Heart left ventricle (tissue), 16 donors: ENCODE measurements at regions of chr6 and their contacts with region 1.

Region 1: DNA sequence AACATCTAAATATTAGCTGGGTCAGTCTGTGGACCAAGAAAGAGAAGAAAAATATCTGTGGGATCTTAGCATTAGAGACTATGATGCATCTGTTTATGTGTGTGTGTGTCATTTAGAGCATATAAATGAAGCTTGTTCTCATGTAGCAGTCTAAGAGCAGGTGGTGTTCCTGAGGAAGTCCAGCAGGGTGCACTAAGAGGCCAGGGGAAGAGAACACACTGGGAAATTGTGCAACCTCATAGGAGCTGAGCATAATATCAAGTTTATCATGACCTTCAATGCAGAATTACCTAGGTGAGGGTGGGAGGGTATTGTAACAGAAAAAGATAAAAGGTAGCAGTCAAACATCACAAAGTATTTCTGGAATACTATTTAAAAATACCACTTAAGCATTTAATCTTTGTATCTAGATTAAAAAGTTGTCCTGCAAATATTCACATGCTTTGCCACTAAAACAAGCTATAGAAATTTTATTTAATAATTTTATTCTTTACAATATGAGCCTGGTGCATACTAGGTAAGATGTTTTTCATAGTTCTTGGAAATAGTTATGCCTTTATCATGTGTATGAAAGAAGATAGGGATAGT is 80.5 kb downstream of the SMPDL3A start:
- DNase-seq: peak in 1 of 5 donors; percentile 24
- ATAC-seq: peak; percentile 61 to 84 (median 80)
- H3K4me3 ChIP-seq: no peak overlapping the region
- H3K27ac ChIP-seq: no peak overlapping the region
- H3K4me1 ChIP-seq: no peaks in the 10 kb centered on the region
- H3K27me3 ChIP-seq: peaks cover 0 to 6% (median 0%) of the 10 kb centered on the region in 9 donors
- CTCF ChIP-seq: peak; percentile 30 to 63 (median 52)
- POLR2A ChIP-seq: no peak

Region 2: GRCh38 chr6:122683989-122684651 is 185.4 kb before region 1 on chr6:
- intact Hi-C with region 1: no loop called
- DNase-seq: no peak
- ATAC-seq: no peak
- H3K4me3 ChIP-seq: no peak overlapping the region
- H3K27ac ChIP-seq: no peak overlapping the region
- H3K4me1 ChIP-seq: no peaks in the 10 kb centered on the region
- H3K27me3 ChIP-seq: no peaks in the 10 kb centered on the region
- CTCF ChIP-seq: no peak
- POLR2A ChIP-seq: no peak

Region 3: GRCh38 chr6:123372737-123373136 is 503.2 kb after region 1 on chr6:
- intact Hi-C with region 1: loop called in 2 of 10 experiments (anchors 5 to 10 kb)
- DNase-seq: no peak
- ATAC-seq: no peak
- H3K4me3 ChIP-seq: no peak overlapping the region
- H3K27ac ChIP-seq: no peak overlapping the region
- H3K4me1 ChIP-seq: no peaks in the 10 kb centered on the region
- H3K27me3 ChIP-seq: no peaks in the 10 kb centered on the region
- CTCF ChIP-seq: no peak
- POLR2A ChIP-seq: no peak

Region 4: GRCh38 chr6:123380257-123380656 is 510.7 kb after region 1 on chr6:
- intact Hi-C with region 1: loop called in 4 of 10 experiments (anchors 2 to 10 kb)
- DNase-seq: no peak
- ATAC-seq: peak; percentile 53 to 83 (median 58)
- H3K4me3 ChIP-seq: no peak overlapping the region
- H3K27ac ChIP-seq: no peak overlapping the region
- H3K4me1 ChIP-seq: no peaks in the 10 kb centered on the region
- H3K27me3 ChIP-seq: no peaks in the 10 kb centered on the region
- CTCF ChIP-seq: peak in 8 of 12 donors; percentile 8 to 45 (median 30)
- POLR2A ChIP-seq: no peak